Activated B cell treated with CpG ODN at 0.5 μM for 24 hours (primary cell): ENCODE measurements at regions of chr15 and their contacts with region 1.

Region 1: GRCh38 chr15:101501703-101502373 is 12.3 kb upstream of the PCSK6 start:
- DNase-seq: peak; percentile 26
- ATAC-seq: peak; percentile 88
- H3K4me3 Mint-ChIP-seq: peak overlapping the region; percentile 61
- H3K27ac Mint-ChIP-seq: no peak overlapping the region
- H3K4me1 Mint-ChIP-seq: peaks cover 18% of the 10 kb centered on the region
- H3K27me3 Mint-ChIP-seq: peaks cover 34% of the 10 kb centered on the region
- CTCF ChIP-seq: no peak

Region 2: GRCh38 chr15:101407439-101407838 is 94.4 kb before region 1 on chr15:
- CTCF ChIA-PET with region 1: no interaction called
- POLR2A ChIA-PET with region 1: no interaction called
- intact Hi-C with region 1: loop called (anchors 5 kb)
- DNase-seq: no peak
- ATAC-seq: peak; percentile 92
- H3K4me3 Mint-ChIP-seq: peak overlapping the region; percentile 29
- H3K27ac Mint-ChIP-seq: no peak overlapping the region
- H3K4me1 Mint-ChIP-seq: peaks cover 59% of the 10 kb centered on the region
- H3K27me3 Mint-ChIP-seq: peaks cover 4% of the 10 kb centered on the region
- CTCF ChIP-seq: no peak